ENCODE measurements at regions of chr18 and their contacts with region 1.

Region 1: DNA sequence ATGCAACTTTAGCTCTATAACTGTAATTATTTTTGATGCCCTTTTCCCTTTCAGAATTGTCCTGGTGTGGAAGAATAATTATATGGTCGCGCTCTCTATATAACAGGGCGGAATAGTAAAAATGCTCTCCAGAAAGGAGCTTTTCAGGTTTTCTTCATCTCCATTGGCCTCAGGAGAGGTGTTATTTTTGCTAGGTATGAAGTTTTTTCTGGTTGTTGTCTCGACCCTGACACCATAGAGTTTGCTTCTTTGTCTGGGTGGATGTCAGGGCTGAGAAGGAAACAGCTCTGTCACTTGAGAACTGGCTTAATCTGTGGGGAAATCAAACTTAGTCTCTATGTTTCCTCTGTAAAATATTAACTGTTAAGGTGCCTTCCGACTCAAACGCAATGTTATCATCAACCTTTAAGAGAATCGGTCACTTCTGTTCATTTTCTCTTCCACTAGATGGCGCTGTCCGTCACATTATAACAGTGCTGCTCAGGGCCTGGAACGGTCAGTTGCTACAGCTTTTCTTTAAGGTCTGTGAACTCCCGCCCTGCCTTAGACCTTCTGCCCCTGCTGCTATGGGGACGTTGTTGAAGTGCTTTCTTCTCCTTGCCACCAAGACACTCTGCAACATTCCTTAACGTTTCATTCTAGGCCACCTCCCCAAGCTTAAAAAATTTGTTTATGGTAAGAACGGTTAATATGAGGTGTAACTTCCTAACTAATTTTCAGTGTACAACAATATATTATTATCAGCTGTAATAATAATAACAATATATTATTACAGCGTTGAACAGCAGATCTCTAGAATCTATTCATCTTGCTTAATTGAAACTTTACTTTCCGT is 23.8 kb upstream of the SERPINB12 start:
- DNase-seq: peak; percentile 39
- ATAC-seq: peak; percentile 67 to 75

Region 2: DNA sequence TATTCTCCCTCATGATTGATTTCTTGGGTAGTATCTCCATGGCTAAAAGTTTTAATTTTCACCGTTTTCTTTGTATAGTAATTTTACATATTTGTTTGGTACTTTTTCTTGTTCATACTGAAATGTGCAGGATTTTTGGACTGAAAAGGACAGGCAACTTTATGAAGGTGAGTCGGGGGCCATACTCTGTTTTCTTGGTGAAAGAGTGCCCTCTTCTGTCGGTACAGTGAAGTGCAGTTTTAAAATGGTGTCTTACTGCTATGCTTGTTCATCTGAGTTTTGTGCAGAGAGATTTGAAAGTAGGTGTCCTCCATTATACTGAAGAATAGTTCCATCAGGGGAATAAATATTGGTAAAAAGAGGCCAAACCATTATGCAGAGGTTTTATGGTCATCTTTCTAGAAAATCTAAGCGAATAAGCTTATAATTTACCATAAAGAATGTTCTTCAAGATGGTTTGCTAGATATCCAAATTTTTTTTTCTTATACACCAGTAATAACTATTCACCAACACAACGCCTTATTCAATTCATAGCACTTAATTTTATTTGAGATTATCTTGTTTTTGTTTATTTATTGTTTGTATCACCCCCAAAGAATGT is 60.1 kb after region 1 on chr18:
- intact Hi-C with region 1: loop called (anchors 1 to 5 kb)
- DNase-seq: no peak
- ATAC-seq: no peak

Region 3: DNA sequence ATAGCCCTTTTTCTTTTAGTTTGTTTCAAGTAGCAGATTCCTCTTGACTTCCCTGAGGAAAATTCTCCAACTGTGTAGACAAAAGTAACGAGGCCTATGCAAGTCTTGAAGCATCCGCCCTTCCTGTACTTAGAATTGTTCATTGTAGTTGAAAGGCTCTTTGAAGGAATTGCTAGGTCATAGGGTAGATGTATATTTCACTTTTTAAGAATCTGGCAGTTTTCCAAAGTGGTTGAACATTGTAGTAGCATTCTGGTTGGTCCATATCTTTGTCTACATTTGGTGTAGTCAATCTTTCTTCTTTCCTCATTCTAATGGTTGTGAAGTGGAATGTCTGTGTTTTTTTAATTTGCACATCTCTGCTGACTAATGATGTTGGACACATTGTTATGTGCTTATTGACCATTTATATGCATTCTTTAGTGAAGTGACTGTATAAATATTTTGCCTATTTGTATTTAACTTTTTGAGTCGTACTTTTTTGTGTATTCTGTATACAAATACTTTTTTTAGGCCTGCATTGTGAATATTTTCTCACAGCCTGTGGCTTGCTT is 178.8 kb after region 1 on chr18:
- intact Hi-C with region 1: no loop called
- DNase-seq: no peak
- ATAC-seq: no peak

Region 4: GRCh38 chr18:63725682-63726480 is 207.5 kb after region 1 on chr18:
- intact Hi-C with region 1: no loop called
- DNase-seq: no peak
- ATAC-seq: no peak

Region 5: DNA sequence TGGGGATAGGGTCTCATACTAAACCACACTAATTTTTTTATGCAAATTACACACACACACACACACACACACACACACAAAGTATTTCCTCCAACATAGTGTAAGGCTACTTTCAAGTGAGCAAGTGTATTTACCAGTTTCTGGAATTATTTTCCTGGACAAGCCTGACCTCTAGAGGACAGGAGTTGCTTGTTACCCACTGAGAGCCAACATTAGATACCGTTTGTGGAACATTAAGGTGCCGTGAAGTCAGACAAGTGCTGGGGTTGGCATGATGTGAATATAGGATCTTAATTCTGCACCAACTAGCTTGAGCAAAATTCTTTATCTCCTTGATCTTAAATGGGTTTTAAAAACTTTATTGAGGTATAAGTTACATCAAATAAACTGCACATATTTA is 329.8 kb after region 1 on chr18:
- intact Hi-C with region 1: loop called (anchors 2 to 10 kb)
- DNase-seq: no peak
- ATAC-seq: peak; percentile 27 to 59

Region 6: DNA sequence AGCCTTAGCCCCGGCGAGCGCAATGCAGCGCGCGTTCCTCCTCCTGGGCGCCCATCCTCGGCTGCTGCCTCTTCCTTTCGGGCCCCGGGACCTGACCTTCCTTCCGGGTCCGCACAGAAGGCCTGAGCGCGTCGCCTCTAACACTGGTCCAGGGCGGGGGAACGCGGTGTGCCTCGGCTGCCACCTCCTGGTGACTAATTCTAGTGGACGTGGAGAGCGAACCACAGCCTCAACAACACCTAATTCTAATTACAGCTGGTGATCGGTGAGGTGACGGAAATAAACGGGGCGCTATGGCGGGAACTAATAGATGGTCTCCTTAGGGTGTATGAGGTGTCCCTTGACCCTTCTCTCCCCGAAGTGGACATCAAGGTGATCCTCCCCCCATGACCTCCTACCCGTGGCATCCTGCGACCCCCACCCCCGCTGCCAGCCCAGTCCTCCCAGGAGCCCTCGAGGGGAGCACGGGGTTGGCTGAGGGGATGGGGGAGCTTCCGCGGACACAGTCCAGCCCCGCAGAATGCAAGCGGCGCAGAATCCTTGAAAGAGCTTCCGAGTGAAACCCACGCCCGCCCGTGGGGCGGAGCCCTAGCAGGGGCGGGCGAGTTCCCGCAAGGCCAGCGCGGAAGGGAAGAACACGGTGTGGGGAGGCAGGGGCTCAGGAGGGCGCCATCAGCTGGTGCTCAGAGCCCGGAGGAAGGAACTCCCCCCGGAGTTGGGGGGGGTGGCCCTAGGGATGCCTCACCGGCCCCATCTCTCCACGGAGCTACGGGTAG is 417.9 kb after region 1 on chr18:
- intact Hi-C with region 1: loop called in 1 of 2 experiments (anchors 2 kb)
- DNase-seq: peak; percentile 89
- ATAC-seq: peak; percentile 96 to 99

Region 7: GRCh38 chr18:63994783-63995399 is 476.5 kb after region 1 on chr18:
- intact Hi-C with region 1: loop called in 1 of 2 experiments (anchors 10 kb)
- DNase-seq: peak; percentile 43
- ATAC-seq: peak; percentile 41 to 53